ENCODE measurements at regions of chr6 and their contacts with region 1.

Region 1: GRCh38 chr6:116217069-116217468 is 36.8 kb downstream of the TSPYL4 start:
- DNase-seq: no peak
- ATAC-seq: peak in 1 of 2 donors; percentile 60
- H3K4me3 ChIP-seq: no peak overlapping the region
- H3K27ac ChIP-seq: no peak overlapping the region
- H3K4me1 ChIP-seq: no peaks in the 10 kb centered on the region
- H3K27me3 ChIP-seq: no peaks in the 10 kb centered on the region
- CTCF ChIP-seq: peak in 4 of 5 experiments; percentile 40 to 55 (median 47)
- POLR2A ChIP-seq: no peak

Region 2: GRCh38 chr6:116561377-116562018 is 344.4 kb after region 1 on chr6:
- in situ Hi-C with region 1: no loop called
- intact Hi-C with region 1: loop called (anchors 5 kb)
- DNase-seq: peak; percentile 32 to 54
- ATAC-seq: peak; percentile 64 to 80
- H3K4me3 ChIP-seq: peak overlapping the region; percentile 31 to 51 (median 38)
- H3K27ac ChIP-seq: peak overlapping the region in 2 of 4 donors; percentile 50 to 55
- H3K4me1 ChIP-seq: peaks cover 0 to 23% of the 10 kb centered on the region in 2 donors
- H3K27me3 ChIP-seq: no peaks in the 10 kb centered on the region
- CTCF ChIP-seq: peak; percentile 71 to 94 (median 85)
- POLR2A ChIP-seq: no peak